ENCODE measurements at regions of chr2 and their contacts with region 1.

Region 1: DNA sequence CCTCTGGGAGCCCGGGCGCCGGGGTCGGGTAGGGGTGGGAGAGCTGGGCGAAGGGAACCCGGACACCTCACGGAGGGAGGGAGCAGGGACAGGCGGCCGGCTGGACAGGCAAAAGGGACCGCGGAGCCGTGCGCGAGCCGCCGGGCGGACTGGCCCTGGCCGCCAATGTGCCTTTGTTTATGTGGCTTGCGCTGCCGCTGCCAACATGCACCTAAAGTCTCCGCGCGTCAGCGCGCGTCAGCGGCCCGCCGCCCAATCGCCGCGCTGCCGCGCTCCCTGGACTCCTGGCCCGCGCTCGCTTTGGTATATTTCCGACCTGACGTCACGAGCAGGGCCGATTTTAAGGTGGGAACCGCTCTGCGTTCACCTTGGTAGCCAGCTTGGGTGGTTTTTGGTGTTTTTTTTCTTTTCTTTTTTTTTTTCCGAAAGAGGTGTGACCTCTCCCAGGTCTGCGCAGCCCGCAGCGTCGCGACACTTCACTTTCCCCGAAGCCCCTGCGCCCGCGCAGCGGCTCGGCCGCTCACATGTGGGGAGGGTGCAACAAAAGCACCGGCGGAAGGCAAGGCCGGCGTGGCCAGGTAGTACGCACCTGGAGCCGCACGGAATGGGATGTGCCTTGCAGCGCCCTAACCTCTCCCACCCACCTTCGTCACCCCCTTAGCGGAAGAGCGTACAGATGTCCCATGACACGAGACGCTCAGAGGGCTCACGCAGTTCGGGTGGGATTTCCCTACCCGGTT is at the start of gene NR4A2:
- DNase-seq: peak; percentile 95
- ATAC-seq: peak; percentile 78
- H3K4me3 ChIP-seq: peak within 1 kb of the TSS; percentile 42
- H3K4me1 ChIP-seq: peaks cover 11% of the 10 kb centered on the region
- CTCF ChIP-seq: no peak
- total RNA-seq, gene NR4A2: 2.9 to 10.4 (median 3.0) TPM

Region 2: GRCh38 chr2:156182141-156182540 is 150.6 kb before region 1 on chr2:
- intact Hi-C with region 1: loop called in 1 of 2 experiments (anchors 10 kb)
- DNase-seq: peak in 1 of 3 donors; percentile 71
- ATAC-seq: peak; percentile 97
- H3K4me3 ChIP-seq: peak overlapping the region; percentile 4
- H3K4me1 ChIP-seq: peaks cover 6% of the 10 kb centered on the region
- CTCF ChIP-seq: no peak

Region 3: DNA sequence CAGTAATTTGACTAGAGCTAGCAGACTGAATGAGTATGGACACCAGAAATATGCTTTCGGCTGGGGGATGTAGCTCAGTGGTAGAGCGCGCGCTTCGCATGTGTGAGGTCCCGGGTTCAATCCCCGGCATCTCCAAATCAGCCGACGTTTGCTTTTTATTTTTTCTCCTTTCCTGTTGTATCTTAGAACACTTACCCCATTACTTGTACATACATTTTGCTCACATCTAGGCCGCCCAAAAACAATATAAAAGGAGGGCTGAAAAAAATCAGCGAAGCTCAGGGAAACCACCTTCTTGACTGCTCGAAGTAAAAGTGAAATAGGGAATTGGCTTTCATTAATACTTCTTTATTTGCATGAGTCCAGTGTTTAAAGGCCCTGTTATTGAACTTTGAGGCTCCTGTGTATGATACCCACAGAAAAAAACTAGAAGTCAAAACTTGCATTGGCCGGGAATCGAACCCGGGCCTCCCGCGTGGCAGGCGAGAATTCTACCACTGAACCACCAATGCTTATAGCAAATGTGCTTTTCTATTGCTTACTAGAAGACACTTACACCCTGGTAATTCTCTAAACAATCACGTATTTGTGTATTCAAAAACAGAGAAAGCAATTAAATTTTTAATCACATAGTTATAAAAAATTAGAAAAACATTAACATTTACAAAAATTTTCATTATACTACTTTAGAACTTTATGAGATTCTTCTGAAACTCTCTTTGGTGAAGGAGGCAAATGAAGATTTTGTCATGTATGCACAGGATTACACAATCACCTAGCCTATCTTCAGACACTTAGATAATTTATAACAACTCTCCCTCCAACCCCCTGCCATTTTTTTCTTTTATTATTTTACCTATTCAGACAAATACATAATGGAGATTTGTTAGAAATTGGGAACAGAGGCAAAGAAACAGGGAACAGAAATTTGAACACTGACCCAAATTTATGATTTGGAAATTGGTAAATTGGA is 68.3 kb after region 1 on chr2:
- intact Hi-C with region 1: loop called in 1 of 2 experiments (anchors 2 kb)
- DNase-seq: peak; percentile 73 to 85 (median 79)
- ATAC-seq: peak; percentile 83
- H3K4me3 ChIP-seq: peak overlapping the region; percentile 35
- H3K4me1 ChIP-seq: peaks cover 15% of the 10 kb centered on the region
- CTCF ChIP-seq: no peak

Measured in mucosa of descending colon (tissue), 3 donors.